PC-3 (cell line): ENCODE measurements at regions of chr1 and their contacts with region 1.

Region 1: GRCh38 chr1:72282271-72283021 is at the start of gene NEGR1:
- DNase-seq: peak; percentile 89
- ATAC-seq: peak; percentile 63
- H3K4me3 ChIP-seq: peak within 1 kb of the TSS; percentile 95
- H3K27ac ChIP-seq: peak within 1 kb of the TSS; percentile 83
- H3K4me1 ChIP-seq: peaks cover 49% of the 10 kb centered on the region
- H3K27me3 ChIP-seq: no peaks in the 10 kb centered on the region
- CTCF ChIP-seq: no peak
- total RNA-seq, gene NEGR1: 1.7 and 3.4 TPM in 2 replicates

Region 2: DNA sequence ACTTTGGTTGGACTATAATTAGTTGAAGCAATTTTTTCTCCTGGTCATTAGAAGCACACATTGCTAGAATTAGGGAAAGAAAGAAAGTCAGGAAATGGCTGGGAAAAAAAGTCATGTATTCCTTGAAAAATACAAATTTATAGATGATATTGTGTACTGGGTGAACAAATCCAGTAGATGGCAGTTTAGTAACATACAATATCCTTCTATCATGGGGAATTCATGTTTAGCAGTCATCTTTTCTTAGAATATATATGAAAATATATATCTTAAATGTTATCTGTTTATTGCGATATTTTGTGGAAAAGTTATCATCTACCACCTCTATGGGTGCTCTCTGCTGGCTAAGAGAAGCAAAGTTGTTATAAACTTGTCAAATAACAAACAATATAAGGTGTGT is 1188.5 kb before region 1 on chr1:
- CTCF ChIA-PET with region 1: no interaction called
- POLR2A ChIA-PET with region 1: no interaction called
- intact Hi-C with region 1: loop called (anchors 5 kb)
- DNase-seq: peak; percentile 53
- ATAC-seq: peak; percentile 25; the same call in 1 of the 2 replicates
- H3K4me3 ChIP-seq: no peak overlapping the region
- H3K27ac ChIP-seq: no peak overlapping the region
- H3K4me1 ChIP-seq: peaks cover 23% of the 10 kb centered on the region
- H3K27me3 ChIP-seq: no peaks in the 10 kb centered on the region
- CTCF ChIP-seq: peak; percentile 57

Region 3: GRCh38 chr1:71587961-71588360 is 694.5 kb before region 1 on chr1:
- CTCF ChIA-PET with region 1: no interaction called
- POLR2A ChIA-PET with region 1: no interaction called
- intact Hi-C with region 1: loop called (anchors 5 kb)
- DNase-seq: peak; percentile 47
- ATAC-seq: no peak; the same call in 1 of the 2 replicates
- H3K4me3 ChIP-seq: no peak overlapping the region
- H3K27ac ChIP-seq: no peak overlapping the region
- H3K4me1 ChIP-seq: peaks cover 14% of the 10 kb centered on the region
- H3K27me3 ChIP-seq: no peaks in the 10 kb centered on the region
- CTCF ChIP-seq: peak; percentile 60

Region 4: DNA sequence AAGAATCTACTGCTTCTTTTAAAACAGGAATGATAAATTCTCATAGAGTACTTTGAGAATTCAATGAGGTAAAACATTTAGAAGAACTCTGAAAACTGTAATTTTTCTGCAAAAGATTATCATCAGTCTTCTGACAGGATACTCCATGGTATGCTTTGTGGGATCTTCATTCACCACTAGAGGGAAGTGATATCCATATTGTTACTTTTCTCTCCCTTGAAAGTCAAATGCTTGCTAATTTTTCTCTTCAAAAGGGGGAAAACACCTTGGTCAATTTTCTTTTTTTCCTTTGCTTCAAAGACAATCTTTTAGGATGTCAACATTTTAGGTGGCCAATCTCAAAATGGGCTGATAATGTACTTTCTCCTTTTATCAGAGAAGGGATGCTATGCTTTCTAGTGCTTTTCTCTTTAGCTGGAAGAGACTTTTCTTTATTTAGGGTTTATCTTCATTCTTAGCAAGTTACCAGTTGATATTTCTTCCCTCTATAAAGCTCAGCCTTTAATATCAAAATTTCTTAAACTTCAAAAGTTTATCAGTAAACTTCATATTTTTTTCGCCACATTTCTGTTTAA is 95.6 kb before region 1 on chr1:
- CTCF ChIA-PET with region 1: no interaction called
- POLR2A ChIA-PET with region 1: no interaction called
- intact Hi-C with region 1: loop called (anchors 1 kb)
- DNase-seq: peak; percentile 59
- ATAC-seq: peak; percentile 81
- H3K4me3 ChIP-seq: no peak overlapping the region
- H3K27ac ChIP-seq: no peak overlapping the region
- H3K4me1 ChIP-seq: no peaks in the 10 kb centered on the region
- H3K27me3 ChIP-seq: no peaks in the 10 kb centered on the region
- CTCF ChIP-seq: peak; percentile 88

Region 5: DNA sequence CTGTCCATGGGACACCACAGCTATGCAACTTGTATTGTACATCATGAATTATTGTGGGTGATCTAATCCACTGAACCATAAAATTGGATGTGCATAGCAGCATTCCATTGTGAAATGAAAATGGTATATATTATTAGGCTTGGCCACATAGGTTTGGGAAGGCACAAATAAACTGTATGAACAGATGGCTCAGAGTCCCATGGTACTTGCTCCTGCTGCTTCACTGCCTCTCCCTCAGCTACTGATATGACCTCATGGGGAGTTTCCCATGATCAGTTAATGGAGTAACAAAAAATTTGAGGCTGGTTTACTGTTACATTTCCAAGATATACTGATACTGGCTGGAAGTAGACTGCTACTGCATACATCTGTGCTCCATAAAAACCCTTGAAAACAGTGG is 152.6 kb after region 1 on chr1:
- CTCF ChIA-PET with region 1: no interaction called
- POLR2A ChIA-PET with region 1: interaction called, 9 read pairs
- intact Hi-C with region 1: loop called (anchors 5 kb)
- DNase-seq: peak; percentile 20
- ATAC-seq: no peak
- H3K4me3 ChIP-seq: no peak overlapping the region
- H3K27ac ChIP-seq: no peak overlapping the region
- H3K4me1 ChIP-seq: peaks cover 31% of the 10 kb centered on the region
- H3K27me3 ChIP-seq: no peaks in the 10 kb centered on the region
- CTCF ChIP-seq: no peak

Region 6: DNA sequence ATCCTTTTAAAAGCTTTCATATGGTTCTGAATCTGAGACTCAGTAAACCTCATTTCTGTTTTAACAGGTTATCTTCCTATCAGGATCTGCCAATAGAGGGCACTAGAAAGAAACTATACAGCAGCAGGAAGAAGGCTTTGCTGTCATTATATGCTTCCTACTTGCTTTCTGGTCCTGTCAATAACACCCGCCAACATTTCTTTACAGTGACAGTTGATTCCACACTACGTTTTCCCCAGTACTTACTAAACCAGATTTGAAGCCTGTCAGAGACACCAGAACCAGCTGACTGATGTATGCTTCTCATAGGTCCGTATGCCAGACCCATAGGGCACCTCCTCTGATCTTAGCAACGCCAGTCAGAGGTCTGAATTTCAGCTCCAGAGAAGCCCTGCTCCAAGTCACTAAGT is 340.9 kb after region 1 on chr1:
- CTCF ChIA-PET with region 1: no interaction called
- POLR2A ChIA-PET with region 1: no interaction called
- intact Hi-C with region 1: loop called (anchors 5 kb)
- DNase-seq: peak; percentile 78
- ATAC-seq: peak; percentile 79
- H3K4me3 ChIP-seq: peak overlapping the region; percentile 51; the same call in 1 of the 2 replicates
- H3K27ac ChIP-seq: no peak overlapping the region
- H3K4me1 ChIP-seq: peaks cover 13% of the 10 kb centered on the region; the same call in 1 of the 2 replicates
- H3K27me3 ChIP-seq: no peaks in the 10 kb centered on the region
- CTCF ChIP-seq: peak; percentile 84

Region 7: GRCh38 chr1:72892461-72892860 is 610.0 kb after region 1 on chr1:
- CTCF ChIA-PET with region 1: no interaction called
- POLR2A ChIA-PET with region 1: no interaction called
- intact Hi-C with region 1: loop called (anchors 10 kb)
- DNase-seq: peak; percentile 73
- ATAC-seq: peak; percentile 98
- H3K4me3 ChIP-seq: no peak overlapping the region
- H3K27ac ChIP-seq: peak overlapping the region; percentile 67
- H3K4me1 ChIP-seq: peaks cover 26% of the 10 kb centered on the region
- H3K27me3 ChIP-seq: no peaks in the 10 kb centered on the region
- CTCF ChIP-seq: no peak